ENCODE measurements at regions of chr19 and their contacts with region 1.

Region 1: GRCh38 chr19:51651216-51651846 is 4.7 kb upstream of the SIGLEC14 start:
- DNase-seq: no peak
- H3K4me3 ChIP-seq: no peak overlapping the region
- H3K27ac ChIP-seq: no peak overlapping the region
- H3K4me1 ChIP-seq: no peaks in the 10 kb centered on the region
- H3K27me3 ChIP-seq: no peaks in the 10 kb centered on the region
- CTCF ChIP-seq: no peak
- EP300 ChIP-seq: no peak
- POLR2A ChIP-seq: no peak

Region 2: GRCh38 chr19:51460164-51460992 is 191.0 kb before region 1 on chr19:
- intact Hi-C with region 1: loop called in 1 of 4 experiments (anchors 10 kb)
- DNase-seq: no peak
- H3K4me3 ChIP-seq: no peak overlapping the region
- H3K27ac ChIP-seq: no peak overlapping the region
- H3K4me1 ChIP-seq: no peaks in the 10 kb centered on the region
- H3K27me3 ChIP-seq: no peaks in the 10 kb centered on the region
- CTCF ChIP-seq: no peak
- EP300 ChIP-seq: no peak
- POLR2A ChIP-seq: no peak

Region 3: DNA sequence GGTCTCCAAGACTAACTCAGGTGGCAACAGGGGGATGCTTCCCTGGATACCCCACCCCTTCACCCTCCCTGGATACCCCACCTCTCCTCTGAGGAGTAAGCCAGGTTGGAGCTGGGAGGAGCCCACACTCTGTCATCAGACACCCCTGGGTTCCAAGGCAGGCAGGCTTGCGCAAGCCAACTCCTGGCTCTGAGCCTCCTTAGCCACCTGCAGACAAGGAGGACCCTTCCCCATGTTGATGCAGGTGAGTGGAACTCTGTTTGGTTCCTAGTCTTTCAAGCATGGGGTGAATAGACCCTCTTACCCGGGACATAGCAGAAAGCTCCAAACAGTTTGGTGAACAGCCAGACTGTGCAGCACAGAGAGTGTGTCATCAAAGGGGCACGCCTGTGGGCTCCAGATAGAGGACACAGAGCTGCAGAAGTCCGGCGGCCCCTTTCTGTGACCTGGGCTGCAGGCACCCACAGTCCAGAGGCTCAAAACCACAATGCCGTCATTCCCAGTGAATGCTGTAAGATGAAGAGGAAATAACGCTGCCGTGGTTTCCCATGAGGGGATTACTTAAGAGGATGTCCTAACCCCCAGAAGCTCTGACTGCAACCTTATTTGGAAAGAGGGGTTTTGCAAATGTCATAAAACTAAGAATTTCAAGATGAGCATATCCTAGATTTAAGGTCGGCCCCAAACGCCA is 84.6 kb after region 1 on chr19:
- intact Hi-C with region 1: no loop called
- DNase-seq: no peak
- H3K4me3 ChIP-seq: no peak overlapping the region
- H3K27ac ChIP-seq: no peak overlapping the region
- H3K4me1 ChIP-seq: no peaks in the 10 kb centered on the region
- H3K27me3 ChIP-seq: no peaks in the 10 kb centered on the region
- CTCF ChIP-seq: no peak
- EP300 ChIP-seq: no peak
- POLR2A ChIP-seq: no peak

Measured in ovary (tissue), 10 donors.